ENCODE measurements at regions of chr12 and their contacts with region 1.

Region 1: DNA sequence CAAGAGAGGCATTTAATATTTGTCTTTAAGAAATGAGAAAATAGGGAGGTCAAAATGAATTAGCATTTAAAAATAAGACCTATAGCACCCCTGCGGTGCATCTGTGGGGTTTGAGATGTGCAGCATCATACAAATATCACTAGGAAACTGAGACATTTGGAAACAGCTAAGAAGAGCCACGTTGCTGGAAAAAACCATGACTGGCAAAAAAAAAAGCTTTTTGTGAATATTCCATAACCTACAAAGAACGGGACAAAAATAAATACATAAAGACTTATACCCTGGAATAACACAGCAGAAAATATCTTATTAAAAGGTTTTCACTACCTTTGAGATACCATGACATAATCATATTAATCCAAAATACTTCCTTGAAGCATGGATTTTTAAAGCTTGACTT is 366.2 kb downstream of the PAWR start:
- DNase-seq: no peak
- ATAC-seq: no peak
- H3K4me3 ChIP-seq: no peak overlapping the region
- H3K27ac ChIP-seq: no peak overlapping the region
- H3K4me1 ChIP-seq: no peaks in the 10 kb centered on the region
- H3K27me3 ChIP-seq: no peaks in the 10 kb centered on the region
- CTCF ChIP-seq: no peak
- POLR2A ChIP-seq: no peak
- RAD21 ChIP-seq: no peak

Region 2: DNA sequence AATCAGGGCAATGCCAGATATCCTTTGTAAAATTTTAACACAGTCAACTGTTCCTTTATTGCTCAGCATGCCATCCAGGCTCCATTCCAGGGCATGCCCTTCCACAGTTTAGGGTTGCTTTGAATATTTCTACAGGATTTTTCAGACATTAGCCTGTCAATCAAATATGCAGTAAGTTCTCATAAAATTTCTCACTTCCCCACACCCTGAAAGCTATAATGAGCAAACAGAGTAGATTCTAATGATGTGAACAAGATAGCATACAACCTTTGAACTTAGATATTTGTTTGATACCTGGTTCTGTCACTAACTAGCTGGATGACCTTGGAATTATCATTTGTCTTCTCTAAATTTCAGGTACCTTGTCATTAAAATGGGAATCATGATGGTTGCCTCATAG is 208.8 kb before region 1 on chr12:
- CTCF ChIA-PET with region 1: no interaction called
- POLR2A ChIA-PET with region 1: no interaction called
- RAD21 ChIA-PET with region 1: no interaction called
- intact Hi-C with region 1: no loop called
- DNase-seq: no peak
- ATAC-seq: no peak
- H3K4me3 ChIP-seq: no peak overlapping the region
- H3K27ac ChIP-seq: no peak overlapping the region
- H3K4me1 ChIP-seq: no peaks in the 10 kb centered on the region
- H3K27me3 ChIP-seq: no peaks in the 10 kb centered on the region
- CTCF ChIP-seq: no peak
- POLR2A ChIP-seq: no peak
- RAD21 ChIP-seq: no peak

Region 3: DNA sequence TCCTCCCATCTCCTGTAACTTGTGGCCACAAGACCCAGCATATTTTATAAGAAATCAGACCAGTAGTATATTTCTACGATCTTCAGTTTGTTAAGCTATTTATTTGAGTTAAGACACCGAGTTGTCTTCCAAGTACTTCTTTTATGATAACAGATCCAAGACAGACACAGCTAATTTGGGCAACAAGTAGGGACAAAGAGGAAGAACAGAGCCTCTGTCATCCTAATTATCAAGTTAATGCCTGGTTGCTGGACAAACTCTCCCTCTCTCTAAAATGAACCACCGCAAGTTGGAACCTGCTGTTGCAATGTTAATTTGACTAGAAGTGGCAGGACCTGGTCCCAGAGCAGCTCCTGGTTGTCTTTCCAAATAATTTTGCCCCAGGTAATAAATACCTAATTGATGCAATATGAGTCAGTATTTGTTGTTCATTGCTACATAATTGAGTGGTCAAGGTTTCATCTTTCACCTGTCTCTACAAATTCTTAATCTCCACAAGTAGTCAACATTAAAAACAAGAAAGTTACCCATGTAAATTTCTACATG is 42.5 kb after region 1 on chr12:
- CTCF ChIA-PET with region 1: no interaction called
- POLR2A ChIA-PET with region 1: no interaction called
- RAD21 ChIA-PET with region 1: interaction called in 1 of 2 experiments, 11 read pairs
- intact Hi-C with region 1: no loop called
- DNase-seq: no peak
- ATAC-seq: no peak
- H3K4me3 ChIP-seq: no peak overlapping the region
- H3K27ac ChIP-seq: no peak overlapping the region
- H3K4me1 ChIP-seq: no peaks in the 10 kb centered on the region
- H3K27me3 ChIP-seq: no peaks in the 10 kb centered on the region
- CTCF ChIP-seq: no peak
- POLR2A ChIP-seq: no peak
- RAD21 ChIP-seq: no peak

Region 4: GRCh38 chr12:79508613-79509012 is 184.0 kb after region 1 on chr12:
- CTCF ChIA-PET with region 1: no interaction called
- POLR2A ChIA-PET with region 1: no interaction called
- RAD21 ChIA-PET with region 1: no interaction called
- intact Hi-C with region 1: no loop called
- DNase-seq: no peak
- ATAC-seq: no peak
- H3K4me3 ChIP-seq: no peak overlapping the region
- H3K27ac ChIP-seq: no peak overlapping the region
- H3K4me1 ChIP-seq: no peaks in the 10 kb centered on the region
- H3K27me3 ChIP-seq: no peaks in the 10 kb centered on the region
- CTCF ChIP-seq: no peak
- POLR2A ChIP-seq: no peak
- RAD21 ChIP-seq: peak; percentile 27; the same call in 1 of the 2 replicates

Measured in HCT116 (cell line).